CD14-positive monocyte (primary cell): ENCODE measurements at regions of chr19 and their contacts with region 1.

Region 1: DNA sequence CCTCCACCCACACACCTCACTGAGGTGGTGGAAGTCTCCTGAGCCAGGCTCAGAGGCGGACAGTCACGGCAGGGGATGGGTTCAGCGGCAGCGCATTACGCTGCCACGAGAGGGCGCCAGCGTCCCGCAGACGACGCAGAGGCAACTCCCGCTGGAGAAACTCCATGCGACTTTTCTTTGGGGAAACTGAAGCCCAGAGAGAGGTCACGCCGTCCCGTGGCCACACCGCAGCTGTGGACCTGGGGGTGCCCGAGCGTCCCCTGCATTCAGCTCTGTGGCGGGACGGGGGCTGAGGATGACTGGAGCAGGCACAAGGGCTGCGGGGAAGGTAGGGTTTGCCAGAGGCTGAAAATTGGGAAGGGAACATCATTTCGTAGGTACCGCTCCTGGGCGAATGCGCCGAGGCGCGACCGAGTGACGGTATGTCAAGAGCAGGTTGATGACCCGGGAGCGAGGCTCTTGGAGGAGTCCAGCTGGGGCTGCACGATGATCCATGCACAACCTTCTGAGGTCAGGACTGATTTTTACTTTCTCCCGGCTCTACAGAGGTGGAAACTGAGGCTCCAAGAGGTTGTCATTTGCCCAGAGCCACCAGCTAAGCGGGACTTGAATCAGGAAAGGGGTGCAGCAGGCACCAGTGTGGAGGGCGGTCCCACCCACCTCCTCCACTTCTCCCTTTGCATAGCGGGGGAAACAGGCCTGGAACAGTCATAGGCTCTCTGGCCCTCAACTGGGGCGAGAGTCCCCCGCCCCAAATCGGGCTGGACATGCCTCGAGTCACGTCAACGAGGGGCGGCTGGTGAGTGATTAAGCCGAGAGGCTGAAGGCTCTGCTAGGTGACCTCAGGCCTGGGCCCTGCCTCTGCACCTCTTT is 690 bp upstream of the ARRDC2 start:
- DNase-seq: peak; percentile 80 to 84 (median 82)
- H3K4me3 ChIP-seq: peak overlapping the region; percentile 41 to 83 (median 45)
- H3K4me3 Mint-ChIP-seq: peak overlapping the region; percentile 94 to 99
- H3K27ac ChIP-seq: peak overlapping the region; percentile 71 to 82
- H3K27ac Mint-ChIP-seq: peak overlapping the region; percentile 86 to 97 (median 95)
- H3K4me1 ChIP-seq: peaks cover 34 to 45% of the 10 kb centered on the region in 2 donors
- H3K4me1 Mint-ChIP-seq: peaks cover 38% of the 10 kb centered on the region
- H3K27me3 ChIP-seq: no peaks in the 10 kb centered on the region
- H3K27me3 Mint-ChIP-seq: peaks cover 0 to 5% (median 0%) of the 10 kb centered on the region in 3 donors
- CTCF ChIP-seq: peak; percentile 97

Region 2: GRCh38 chr19:18017275-18018083 is 10.2 kb after region 1 on chr19:
- intact Hi-C with region 1: loop called (anchors 1 to 2 kb)
- DNase-seq: peak in 2 of 3 donors; percentile 57 to 60
- H3K4me3 ChIP-seq: peak overlapping the region in 1 of 3 experiments; percentile 27
- H3K4me3 Mint-ChIP-seq: peak overlapping the region; percentile 34 to 76
- H3K27ac ChIP-seq: peak overlapping the region; percentile 62 to 72
- H3K27ac Mint-ChIP-seq: peak overlapping the region; percentile 63 to 92 (median 78)
- H3K4me1 ChIP-seq: peaks cover 63 to 70% of the 10 kb centered on the region in 2 donors
- H3K4me1 Mint-ChIP-seq: peaks cover 74% of the 10 kb centered on the region
- H3K27me3 ChIP-seq: no peaks in the 10 kb centered on the region
- H3K27me3 Mint-ChIP-seq: peaks cover 0 to 6% (median 4%) of the 10 kb centered on the region in 3 donors
- CTCF ChIP-seq: no peak

Region 3: GRCh38 chr19:18023622-18024251 is 16.5 kb after region 1 on chr19:
- intact Hi-C with region 1: loop called in 1 of 2 experiments (anchors 2 kb)
- DNase-seq: peak; percentile 92 to 95 (median 93)
- H3K4me3 ChIP-seq: peak overlapping the region in 2 of 3 experiments; percentile 27 to 46
- H3K4me3 Mint-ChIP-seq: peak overlapping the region; percentile 60 to 81
- H3K27ac ChIP-seq: peak overlapping the region; percentile 94 to 97
- H3K27ac Mint-ChIP-seq: peak overlapping the region; percentile 87 to 99 (median 95)
- H3K4me1 ChIP-seq: peaks cover 53 to 57% of the 10 kb centered on the region in 2 donors
- H3K4me1 Mint-ChIP-seq: peaks cover 55% of the 10 kb centered on the region
- H3K27me3 ChIP-seq: no peaks in the 10 kb centered on the region
- H3K27me3 Mint-ChIP-seq: peaks cover 2 to 14% (median 2%) of the 10 kb centered on the region in 3 donors
- CTCF ChIP-seq: no peak

Region 4: GRCh38 chr19:18058208-18059030 is 51.1 kb after region 1 on chr19:
- intact Hi-C with region 1: loop called (anchors 1 kb)
- DNase-seq: peak; percentile 64 to 74 (median 72)
- H3K4me3 ChIP-seq: peak overlapping the region; percentile 1 to 69 (median 40)
- H3K4me3 Mint-ChIP-seq: peak overlapping the region; percentile 68 to 80
- H3K27ac ChIP-seq: peak overlapping the region; percentile 54 to 61
- H3K27ac Mint-ChIP-seq: peak overlapping the region; percentile 45 to 88 (median 74)
- H3K4me1 ChIP-seq: peaks cover 14 to 19% of the 10 kb centered on the region in 2 donors
- H3K4me1 Mint-ChIP-seq: peaks cover 18% of the 10 kb centered on the region
- H3K27me3 ChIP-seq: no peaks in the 10 kb centered on the region
- H3K27me3 Mint-ChIP-seq: peaks cover 0 to 3% (median 2%) of the 10 kb centered on the region in 3 donors
- CTCF ChIP-seq: peak; percentile 98

Region 5: DNA sequence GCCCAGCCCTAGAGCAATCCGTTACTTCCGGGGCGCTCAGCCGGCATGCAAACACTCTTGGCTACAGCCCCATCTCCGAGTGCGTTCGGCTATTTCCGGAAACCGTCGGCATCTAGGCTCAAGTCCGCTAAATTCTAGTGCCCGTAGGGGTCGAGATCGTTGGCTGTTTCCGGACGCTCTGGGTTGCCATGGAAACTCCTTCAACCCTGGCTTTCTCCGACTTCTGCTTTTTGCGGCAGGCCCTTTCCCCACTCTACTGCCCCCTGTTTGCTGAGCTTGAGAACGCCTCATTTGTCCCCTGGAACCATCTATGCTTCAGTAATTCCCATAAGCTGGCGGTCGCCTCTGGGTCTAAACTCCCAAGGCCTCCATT is 145.2 kb after region 1 on chr19:
- intact Hi-C with region 1: loop called in 1 of 2 experiments (anchors 5 kb)
- DNase-seq: peak; percentile 99 to 100 (median 100)
- H3K4me3 ChIP-seq: peak overlapping the region; percentile 65 to 92 (median 89)
- H3K4me3 Mint-ChIP-seq: peak overlapping the region; percentile 87 to 93
- H3K27ac ChIP-seq: peak overlapping the region; percentile 94 to 100
- H3K27ac Mint-ChIP-seq: peak overlapping the region; percentile 95 to 99 (median 97)
- H3K4me1 ChIP-seq: peaks cover 30 to 42% of the 10 kb centered on the region in 2 donors
- H3K4me1 Mint-ChIP-seq: peaks cover 36% of the 10 kb centered on the region
- H3K27me3 ChIP-seq: no peaks in the 10 kb centered on the region
- H3K27me3 Mint-ChIP-seq: peaks cover 0 to 2% (median 1%) of the 10 kb centered on the region in 3 donors
- CTCF ChIP-seq: peak; percentile 93

Region 6: DNA sequence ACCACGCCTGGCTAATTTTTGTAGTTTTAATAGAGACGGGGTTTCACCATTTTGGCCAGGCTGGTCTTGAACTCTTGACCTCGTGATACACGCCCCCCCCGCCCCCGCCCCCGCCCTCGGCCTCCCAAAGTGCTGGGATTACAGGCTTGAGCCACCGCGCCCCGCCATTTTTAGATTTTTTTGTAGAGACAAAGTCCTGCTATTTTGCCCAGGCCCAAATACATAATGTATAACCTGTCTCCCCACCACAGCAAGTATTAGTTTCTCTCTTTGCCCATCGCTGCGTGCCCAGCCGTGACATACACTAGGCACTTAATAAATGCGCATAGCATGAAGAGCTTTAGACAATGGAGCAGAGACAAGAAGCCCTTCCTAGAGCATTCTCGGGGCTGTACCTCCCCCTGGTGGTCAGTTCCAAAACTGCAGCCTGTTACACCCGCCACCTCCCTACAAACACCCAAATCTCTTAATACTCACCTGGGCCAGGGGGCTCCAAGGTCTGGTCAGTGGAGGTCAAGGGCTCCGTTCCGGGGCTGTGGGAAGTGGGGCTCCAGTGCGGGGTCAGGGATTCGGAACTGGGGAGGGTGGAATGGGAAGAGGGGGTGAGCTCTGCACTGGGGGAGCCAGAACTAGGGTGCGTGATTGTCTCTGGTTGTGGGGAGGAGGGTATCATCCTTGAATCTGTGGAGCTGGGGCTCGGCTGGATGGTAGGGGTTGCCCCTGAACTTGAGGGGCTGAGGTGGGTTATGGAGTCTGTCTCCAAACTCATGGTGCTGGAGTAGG is 244.5 kb after region 1 on chr19:
- intact Hi-C with region 1: loop called in 1 of 2 experiments (anchors 5 kb)
- DNase-seq: peak; percentile 56 to 77 (median 76)
- H3K4me3 ChIP-seq: no peak overlapping the region
- H3K4me3 Mint-ChIP-seq: peak overlapping the region in 1 of 2 donors; percentile 16
- H3K27ac ChIP-seq: no peak overlapping the region
- H3K27ac Mint-ChIP-seq: peak overlapping the region in 1 of 7 donors; percentile 42
- H3K4me1 ChIP-seq: peaks cover 20 to 25% of the 10 kb centered on the region in 2 donors
- H3K4me1 Mint-ChIP-seq: peaks cover 21% of the 10 kb centered on the region
- H3K27me3 ChIP-seq: peaks cover 0 to 2% of the 10 kb centered on the region in 2 donors
- H3K27me3 Mint-ChIP-seq: peaks cover 5 to 27% (median 10%) of the 10 kb centered on the region in 3 donors
- CTCF ChIP-seq: peak; percentile 84